Activated naive CD4-positive, alpha-beta T cell treated with anti-CD3 and anti-CD28 coated beads for 36 hours (primary cell): ENCODE measurements at regions of chr16 and their contacts with region 1.

Region 1: DNA sequence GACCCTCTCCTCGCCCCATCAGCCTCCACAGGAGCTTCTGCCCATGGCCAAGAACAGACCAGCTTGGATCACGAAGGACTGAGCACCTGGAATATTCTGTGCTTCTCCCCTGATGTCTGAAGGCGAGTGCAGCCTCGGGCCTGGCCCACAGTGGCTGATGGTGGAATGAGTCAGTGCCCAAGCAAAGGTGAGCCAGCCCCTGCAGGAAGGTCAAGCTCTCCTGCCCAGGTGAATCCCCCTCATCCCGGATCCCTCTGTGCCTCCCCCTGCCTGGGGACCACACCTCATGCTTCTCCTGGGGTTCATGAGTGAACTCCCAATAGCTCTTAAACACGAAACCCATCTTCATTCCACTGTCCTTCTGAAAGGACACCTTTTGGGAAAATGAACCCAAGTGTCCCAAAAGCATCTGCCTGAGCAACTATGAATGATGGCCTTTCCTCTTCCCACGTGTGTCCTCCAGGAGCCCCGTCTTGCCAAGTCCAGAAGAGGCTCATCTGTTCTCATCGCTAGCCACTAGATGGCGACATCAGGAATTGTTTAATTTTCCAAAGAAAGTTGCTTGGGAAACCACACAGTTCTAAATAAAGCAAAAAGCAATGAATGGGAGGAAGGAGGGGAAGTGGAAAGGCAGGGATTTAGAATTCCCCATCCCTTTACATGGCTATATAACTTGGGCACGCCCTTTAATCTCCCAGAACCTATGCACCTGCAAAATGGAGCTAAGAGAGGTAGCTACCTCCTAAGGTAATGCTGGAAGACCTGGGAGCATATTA is 9.2 kb upstream of the CDH5 start:
- DNase-seq: peak; percentile 47
- H3K4me3 Mint-ChIP-seq: no peak overlapping the region
- H3K27ac Mint-ChIP-seq: no peak overlapping the region
- H3K4me1 Mint-ChIP-seq: no peaks in the 10 kb centered on the region
- H3K27me3 Mint-ChIP-seq: peaks cover 29% of the 10 kb centered on the region

Region 2: GRCh38 chr16:66315210-66315825 is 42.0 kb before region 1 on chr16:
- CTCF ChIA-PET with region 1: no interaction called
- intact Hi-C with region 1: no loop called
- DNase-seq: peak; percentile 68
- H3K4me3 Mint-ChIP-seq: no peak overlapping the region
- H3K27ac Mint-ChIP-seq: no peak overlapping the region
- H3K4me1 Mint-ChIP-seq: no peaks in the 10 kb centered on the region
- H3K27me3 Mint-ChIP-seq: no peaks in the 10 kb centered on the region

Region 3: GRCh38 chr16:66337463-66338188 is 19.7 kb before region 1 on chr16:
- CTCF ChIA-PET with region 1: interaction called, 53 read pairs
- intact Hi-C with region 1: no loop called
- DNase-seq: no peak
- H3K4me3 Mint-ChIP-seq: no peak overlapping the region
- H3K27ac Mint-ChIP-seq: no peak overlapping the region
- H3K4me1 Mint-ChIP-seq: no peaks in the 10 kb centered on the region
- H3K27me3 Mint-ChIP-seq: peaks cover 11% of the 10 kb centered on the region

Region 4: DNA sequence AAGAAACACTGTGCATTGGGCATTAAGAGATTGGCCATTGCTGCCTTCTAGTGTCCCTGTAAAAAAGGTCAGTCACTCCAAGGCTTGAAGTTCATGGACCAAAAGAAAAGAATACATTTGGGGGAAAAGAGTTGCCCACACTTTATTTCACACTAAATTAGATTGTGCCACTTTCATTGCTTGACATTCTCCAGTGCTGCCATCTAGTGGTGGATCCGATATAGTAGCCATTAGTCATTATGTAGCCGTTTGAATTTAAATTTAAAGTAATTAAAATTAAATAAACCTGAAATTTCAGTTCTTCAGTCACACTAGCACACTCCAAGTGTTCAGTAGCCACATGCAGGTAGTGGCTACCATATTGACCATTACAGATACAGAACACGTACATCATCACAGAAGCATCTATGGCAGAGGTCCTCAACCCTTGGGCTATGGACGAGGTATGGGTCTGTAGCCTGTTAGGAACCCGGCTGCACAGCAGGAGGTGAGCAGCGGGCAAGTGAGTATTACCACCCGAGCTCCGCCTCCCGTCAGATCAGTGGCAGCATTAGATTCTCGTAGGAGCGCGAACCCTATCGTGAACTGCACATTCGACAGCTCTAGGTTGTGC is 12.7 kb before region 1 on chr16:
- CTCF ChIA-PET with region 1: interaction called, 53 read pairs
- intact Hi-C with region 1: no loop called
- DNase-seq: peak; percentile 62
- H3K4me3 Mint-ChIP-seq: no peak overlapping the region
- H3K27ac Mint-ChIP-seq: no peak overlapping the region
- H3K4me1 Mint-ChIP-seq: no peaks in the 10 kb centered on the region
- H3K27me3 Mint-ChIP-seq: peaks cover 31% of the 10 kb centered on the region

Region 5: GRCh38 chr16:66427036-66427860 is 69.9 kb after region 1 on chr16 and contains the start of gene BEAN1:
- CTCF ChIA-PET with region 1: no interaction called
- intact Hi-C with region 1: no loop called
- DNase-seq: no peak
- H3K4me3 Mint-ChIP-seq: peak within 1 kb of the TSS; percentile 35
- H3K27ac Mint-ChIP-seq: no peak within 1 kb of the TSS
- H3K4me1 Mint-ChIP-seq: peaks cover 4% of the 10 kb centered on the region
- H3K27me3 Mint-ChIP-seq: peaks cover 59% of the 10 kb centered on the region
- total RNA-seq, gene BEAN1: not detected